AG04450 (cell line): ENCODE measurements at regions of chr2 and their contacts with region 1.

Region 1: DNA sequence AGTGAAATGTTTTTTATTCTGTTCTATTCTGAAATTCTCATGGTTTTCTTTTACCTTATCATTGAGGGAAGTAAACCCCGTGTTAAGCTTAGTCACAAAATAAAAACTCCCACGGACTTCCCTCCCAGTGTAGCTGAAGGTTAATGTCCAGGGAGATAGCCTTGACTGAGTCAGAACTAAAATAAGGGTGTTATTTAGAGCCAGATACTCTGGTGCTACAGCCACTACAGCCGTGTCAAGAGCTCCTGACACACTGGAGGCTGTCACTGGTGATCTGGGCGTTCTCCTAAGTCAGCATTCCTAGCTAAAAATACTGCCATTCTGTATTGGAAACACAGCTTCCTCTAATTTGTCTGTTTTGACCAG is 82.0 kb upstream of the RANBP2 start:
- DNase-seq: no peak
- H3K4me3 ChIP-seq: no peak overlapping the region
- H3K27ac ChIP-seq: peak overlapping the region; percentile 68
- H3K27me3 ChIP-seq: no peaks in the 10 kb centered on the region
- CTCF ChIP-seq: no peak

Region 2: GRCh38 chr2:108575132-108575966 is 61.9 kb before region 1 on chr2:
- CTCF ChIA-PET with region 1: interaction called, 16 read pairs
- POLR2A ChIA-PET with region 1: interaction called, 4 read pairs
- DNase-seq: peak; percentile 86
- H3K4me3 ChIP-seq: no peak overlapping the region
- H3K27ac ChIP-seq: peak overlapping the region; percentile 84
- H3K27me3 ChIP-seq: no peaks in the 10 kb centered on the region
- CTCF ChIP-seq: no peak

Region 3: DNA sequence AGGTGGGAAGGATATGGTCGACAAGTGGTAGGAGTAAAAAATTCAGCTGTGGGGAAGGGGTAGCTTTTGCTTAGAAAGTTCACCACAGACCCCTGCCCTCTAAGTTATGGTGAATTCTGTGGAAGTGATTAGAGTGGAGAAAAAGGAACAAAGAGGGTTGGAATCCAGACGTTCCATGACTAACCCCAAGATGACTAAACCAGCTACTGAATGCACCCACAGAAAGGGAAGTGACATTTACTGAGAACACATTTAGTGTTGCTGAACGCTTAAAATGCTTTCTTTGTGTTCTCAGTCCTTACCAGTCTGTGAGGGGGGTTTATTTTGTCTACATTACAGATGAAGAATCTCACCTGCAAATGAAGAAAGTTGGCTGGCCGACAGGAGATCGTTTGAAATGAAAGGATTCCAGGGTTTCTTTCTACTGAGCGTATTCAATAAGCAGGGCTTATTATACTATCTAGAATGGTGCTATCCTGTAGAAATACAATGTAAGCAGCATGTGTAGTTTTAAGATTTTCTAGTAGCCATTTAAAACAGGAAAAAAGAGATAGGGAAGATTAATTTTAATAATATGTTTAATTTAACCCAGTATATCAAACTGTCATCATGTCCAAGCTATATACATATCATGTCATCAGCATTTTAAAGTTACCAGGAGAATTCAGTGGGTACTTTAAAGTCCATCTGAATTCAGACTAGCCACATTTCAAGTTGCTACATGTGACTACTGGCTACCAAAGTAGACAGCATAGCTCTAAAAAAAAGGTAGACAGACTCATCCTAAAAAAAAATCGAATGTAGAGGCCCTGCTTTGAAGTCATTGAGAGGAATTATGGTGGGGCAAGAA is 42.9 kb before region 1 on chr2:
- CTCF ChIA-PET with region 1: interaction called, 33 read pairs
- POLR2A ChIA-PET with region 1: interaction called, 3 read pairs
- DNase-seq: no peak
- H3K4me3 ChIP-seq: no peak overlapping the region
- H3K27ac ChIP-seq: peak overlapping the region; percentile 94
- H3K27me3 ChIP-seq: no peaks in the 10 kb centered on the region
- CTCF ChIP-seq: no peak

Region 4: DNA sequence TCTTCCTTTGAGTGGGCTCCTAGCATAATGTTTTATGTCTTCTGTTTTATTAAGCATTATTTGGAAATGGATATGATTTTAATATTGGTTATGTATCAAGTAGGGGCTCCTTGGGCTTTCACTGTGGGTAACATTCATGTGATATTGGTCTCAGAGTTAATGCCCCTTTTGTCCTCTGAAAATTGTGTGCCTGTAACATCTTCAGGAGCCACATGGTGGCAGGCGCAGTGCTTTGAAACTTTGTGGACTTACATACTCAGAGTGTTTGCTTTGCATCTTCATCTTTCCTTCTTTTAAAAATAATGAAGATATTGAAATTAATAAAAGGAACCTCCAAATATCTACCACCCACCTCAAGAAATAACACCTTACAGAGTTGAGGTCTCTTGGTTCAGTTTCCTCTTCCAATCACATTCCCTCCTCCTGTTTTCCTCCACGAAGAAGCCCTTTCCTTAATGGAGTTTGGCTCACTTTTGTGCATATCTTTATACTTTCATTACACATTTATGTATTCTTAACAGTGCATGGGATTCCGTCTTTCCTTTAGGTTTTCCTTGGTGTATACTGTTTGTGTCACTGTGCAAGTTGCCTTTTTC is 29.5 kb before region 1 on chr2:
- CTCF ChIA-PET with region 1: interaction called, 93 read pairs
- POLR2A ChIA-PET with region 1: interaction called, 3 read pairs
- DNase-seq: no peak
- H3K4me3 ChIP-seq: no peak overlapping the region
- H3K27ac ChIP-seq: no peak overlapping the region
- H3K27me3 ChIP-seq: no peaks in the 10 kb centered on the region
- CTCF ChIP-seq: peak; percentile 70

Region 5: DNA sequence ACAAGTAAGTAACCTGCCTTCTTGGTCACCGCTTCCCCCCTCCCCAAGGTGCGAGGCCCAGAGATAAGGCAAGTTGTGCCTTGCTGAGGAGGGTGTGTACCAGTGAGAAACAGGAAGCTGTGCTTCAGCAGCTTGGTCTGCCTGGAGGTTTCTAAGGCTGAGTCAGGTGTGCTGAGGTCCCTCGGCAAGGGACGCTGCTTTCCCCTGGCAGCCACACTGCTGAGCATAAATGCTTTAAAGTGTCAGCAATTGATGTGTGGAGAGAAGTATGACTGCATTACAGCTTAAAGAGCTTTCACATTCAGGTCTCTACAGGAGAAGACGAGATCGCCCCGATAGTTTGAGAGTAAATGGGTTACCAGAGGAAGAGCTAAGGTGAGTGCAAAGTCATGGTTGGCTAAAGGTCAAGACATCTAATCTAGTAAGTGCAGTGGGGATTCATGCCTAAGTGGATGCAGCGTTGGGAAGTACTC is 16.2 kb before region 1 on chr2:
- CTCF ChIA-PET with region 1: interaction called, 93 read pairs
- POLR2A ChIA-PET with region 1: no interaction called
- DNase-seq: no peak
- H3K4me3 ChIP-seq: no peak overlapping the region
- H3K27ac ChIP-seq: no peak overlapping the region
- H3K27me3 ChIP-seq: no peaks in the 10 kb centered on the region
- CTCF ChIP-seq: no peak

Region 6: GRCh38 chr2:108626995-108627394 is 10.3 kb before region 1 on chr2:
- CTCF ChIA-PET with region 1: interaction called, 38 read pairs
- POLR2A ChIA-PET with region 1: no interaction called
- DNase-seq: no peak
- H3K4me3 ChIP-seq: no peak overlapping the region
- H3K27ac ChIP-seq: no peak overlapping the region
- H3K27me3 ChIP-seq: no peaks in the 10 kb centered on the region
- CTCF ChIP-seq: no peak